ENCODE measurements at regions of chr13 and their contacts with region 1.

Region 1: DNA sequence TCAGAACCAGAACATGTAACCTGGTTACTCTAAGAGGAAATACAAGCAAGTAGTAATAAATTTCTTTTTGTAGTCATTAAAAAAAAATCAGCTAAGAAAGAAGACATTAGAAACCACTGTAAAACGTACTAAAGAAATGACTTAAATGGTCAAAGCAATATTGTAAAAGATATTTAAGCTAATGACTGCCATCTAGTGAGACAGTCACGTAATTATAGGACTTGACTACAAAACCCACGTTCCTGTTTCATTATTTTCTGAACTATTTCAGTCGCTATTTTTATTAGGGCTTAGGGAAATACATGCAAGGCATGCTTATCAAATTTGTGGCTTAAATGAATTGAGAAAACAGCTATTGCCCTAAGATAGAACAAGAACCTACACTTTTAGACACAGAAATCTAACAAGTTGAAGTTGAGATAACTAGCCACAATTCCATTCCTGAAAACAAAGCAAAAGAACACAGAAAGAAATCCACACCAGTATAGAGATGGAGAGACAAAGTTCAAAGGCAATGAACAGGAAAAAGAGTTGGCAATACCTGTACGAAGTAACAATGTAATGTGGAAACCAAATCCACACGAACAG is 17.9 kb downstream of the ALG5 start:
- DNase-seq: peak in 1 of 2 donors; percentile 26
- ATAC-seq: no peak
- H3K4me3 ChIP-seq: no peak overlapping the region
- H3K4me3 Mint-ChIP-seq: no peak overlapping the region
- H3K27ac ChIP-seq: no peak overlapping the region
- H3K27ac Mint-ChIP-seq: peak overlapping the region; percentile 6 to 40
- H3K4me1 ChIP-seq: no peaks in the 10 kb centered on the region
- H3K4me1 Mint-ChIP-seq: peaks cover 0 to 4% of the 10 kb centered on the region in 2 donors
- H3K27me3 ChIP-seq: no peaks in the 10 kb centered on the region
- H3K27me3 Mint-ChIP-seq: no peaks in the 10 kb centered on the region
- CTCF ChIP-seq: no peak

Region 2: DNA sequence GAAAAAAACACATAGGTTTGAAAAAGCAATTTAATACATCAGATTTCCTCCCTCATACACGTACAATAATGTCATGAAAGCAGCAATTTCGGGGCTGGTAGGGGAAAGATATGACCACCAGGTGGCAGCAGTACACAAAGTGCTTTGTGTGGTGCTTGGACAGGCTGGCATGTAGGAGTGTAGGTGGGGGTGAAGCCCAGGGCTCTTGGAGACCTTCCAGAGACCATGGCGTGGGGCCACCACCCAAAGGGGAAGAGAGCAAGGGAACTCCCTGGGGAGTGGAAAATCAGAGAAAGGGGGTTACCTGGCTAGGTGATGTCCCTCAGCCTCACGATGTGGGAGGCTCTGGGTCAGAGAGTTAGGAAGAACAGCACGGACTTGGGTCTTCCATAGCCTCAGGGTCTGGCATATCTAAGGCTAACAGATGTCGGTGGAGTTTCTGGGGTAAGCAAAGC is 560.8 kb before region 1 on chr13:
- intact Hi-C with region 1: loop called (anchors 5 kb)
- DNase-seq: peak; percentile 34 to 71
- ATAC-seq: peak; percentile 60 to 85 (median 74)
- H3K4me3 ChIP-seq: no peak overlapping the region
- H3K4me3 Mint-ChIP-seq: no peak overlapping the region
- H3K27ac ChIP-seq: no peak overlapping the region
- H3K27ac Mint-ChIP-seq: no peak overlapping the region
- H3K4me1 ChIP-seq: no peaks in the 10 kb centered on the region
- H3K4me1 Mint-ChIP-seq: peaks cover 0 to 11% of the 10 kb centered on the region in 2 donors
- H3K27me3 ChIP-seq: no peaks in the 10 kb centered on the region
- H3K27me3 Mint-ChIP-seq: peaks cover 15 to 29% of the 10 kb centered on the region in 2 donors
- CTCF ChIP-seq: peak; percentile 72

Region 3: DNA sequence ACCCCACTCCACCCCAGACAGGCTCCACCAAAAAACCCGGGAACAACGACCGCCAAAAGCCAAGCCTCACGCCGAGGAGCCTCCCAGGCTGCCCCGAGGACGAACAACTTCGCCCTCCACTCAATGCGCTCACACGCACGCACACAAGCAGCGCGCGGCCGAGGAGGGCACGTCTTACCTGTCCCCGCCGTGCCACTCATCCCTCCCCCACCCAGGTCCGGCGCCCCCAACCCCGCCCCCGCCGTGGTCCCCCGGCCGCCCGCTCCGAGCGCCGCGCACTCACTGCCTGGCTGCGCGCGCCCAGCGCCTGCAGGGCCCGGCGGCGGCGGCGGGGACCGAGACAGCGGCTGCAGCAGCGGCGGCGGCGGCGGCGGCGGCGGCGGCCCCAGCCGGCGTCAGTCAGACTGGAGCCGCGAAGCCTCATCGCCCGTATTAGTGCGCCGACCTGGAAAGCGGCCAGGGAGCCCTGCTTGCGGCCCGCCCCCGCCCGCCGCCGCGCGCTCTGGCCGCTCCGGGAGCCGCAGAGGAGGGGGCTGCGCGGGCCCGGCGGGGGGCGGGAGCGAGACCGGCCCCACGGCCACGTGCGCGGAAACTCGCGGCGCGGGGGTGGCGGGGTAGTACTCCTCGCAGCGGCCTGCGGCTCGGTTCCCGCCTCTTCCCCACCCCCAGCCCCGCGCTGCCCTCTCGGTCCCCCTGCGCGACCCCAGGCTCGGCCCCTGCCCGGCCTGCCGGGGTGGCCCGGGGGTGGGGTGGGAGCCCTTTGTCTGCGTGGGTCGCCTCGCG is 61.2 kb before region 1 on chr13 and contains the start of gene SMAD9:
- intact Hi-C with region 1: no loop called
- DNase-seq: no peak
- ATAC-seq: peak in 2 of 3 donors; percentile 26 to 61
- H3K4me3 ChIP-seq: no peak within 1 kb of the TSS
- H3K4me3 Mint-ChIP-seq: peak within 1 kb of the TSS; percentile 70
- H3K27ac ChIP-seq: no peak within 1 kb of the TSS
- H3K27ac Mint-ChIP-seq: no peak within 1 kb of the TSS
- H3K4me1 ChIP-seq: peaks cover 4% of the 10 kb centered on the region
- H3K4me1 Mint-ChIP-seq: no peaks in the 10 kb centered on the region
- H3K27me3 ChIP-seq: peaks cover 7% of the 10 kb centered on the region
- H3K27me3 Mint-ChIP-seq: peaks cover 44 to 72% of the 10 kb centered on the region in 2 donors
- CTCF ChIP-seq: no peak
- total RNA-seq, gene SMAD9: not detected

Region 4: DNA sequence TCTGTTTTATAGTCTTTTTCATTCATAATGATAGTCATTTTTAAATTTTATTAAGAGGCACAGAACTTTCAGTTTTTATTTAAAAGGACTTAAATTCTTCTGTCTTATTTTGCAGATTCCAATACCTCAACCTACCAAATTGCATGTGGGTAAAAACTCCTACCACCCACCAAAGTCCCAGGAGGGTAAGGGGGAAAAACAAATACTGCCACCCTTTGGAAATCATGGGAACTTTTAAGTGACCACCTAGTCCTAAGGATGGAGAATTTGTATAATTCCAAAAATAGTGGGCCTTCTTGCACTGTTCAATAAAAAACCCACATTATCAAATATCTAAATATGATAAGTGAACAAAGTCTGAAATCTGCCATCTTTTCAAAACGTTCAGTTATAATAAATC is 68.6 kb after region 1 on chr13:
- intact Hi-C with region 1: no loop called
- DNase-seq: no peak
- ATAC-seq: no peak
- H3K4me3 ChIP-seq: no peak overlapping the region
- H3K4me3 Mint-ChIP-seq: no peak overlapping the region
- H3K27ac ChIP-seq: no peak overlapping the region
- H3K27ac Mint-ChIP-seq: no peak overlapping the region
- H3K4me1 ChIP-seq: no peaks in the 10 kb centered on the region
- H3K4me1 Mint-ChIP-seq: peaks cover 36% of the 10 kb centered on the region in 2 donors
- H3K27me3 ChIP-seq: no peaks in the 10 kb centered on the region
- H3K27me3 Mint-ChIP-seq: no peaks in the 10 kb centered on the region
- CTCF ChIP-seq: no peak

Measured in natural killer cell (primary cell).